WTC11 (cell line): ENCODE measurements at regions of chr1 and their contacts with region 1.

Region 1: DNA sequence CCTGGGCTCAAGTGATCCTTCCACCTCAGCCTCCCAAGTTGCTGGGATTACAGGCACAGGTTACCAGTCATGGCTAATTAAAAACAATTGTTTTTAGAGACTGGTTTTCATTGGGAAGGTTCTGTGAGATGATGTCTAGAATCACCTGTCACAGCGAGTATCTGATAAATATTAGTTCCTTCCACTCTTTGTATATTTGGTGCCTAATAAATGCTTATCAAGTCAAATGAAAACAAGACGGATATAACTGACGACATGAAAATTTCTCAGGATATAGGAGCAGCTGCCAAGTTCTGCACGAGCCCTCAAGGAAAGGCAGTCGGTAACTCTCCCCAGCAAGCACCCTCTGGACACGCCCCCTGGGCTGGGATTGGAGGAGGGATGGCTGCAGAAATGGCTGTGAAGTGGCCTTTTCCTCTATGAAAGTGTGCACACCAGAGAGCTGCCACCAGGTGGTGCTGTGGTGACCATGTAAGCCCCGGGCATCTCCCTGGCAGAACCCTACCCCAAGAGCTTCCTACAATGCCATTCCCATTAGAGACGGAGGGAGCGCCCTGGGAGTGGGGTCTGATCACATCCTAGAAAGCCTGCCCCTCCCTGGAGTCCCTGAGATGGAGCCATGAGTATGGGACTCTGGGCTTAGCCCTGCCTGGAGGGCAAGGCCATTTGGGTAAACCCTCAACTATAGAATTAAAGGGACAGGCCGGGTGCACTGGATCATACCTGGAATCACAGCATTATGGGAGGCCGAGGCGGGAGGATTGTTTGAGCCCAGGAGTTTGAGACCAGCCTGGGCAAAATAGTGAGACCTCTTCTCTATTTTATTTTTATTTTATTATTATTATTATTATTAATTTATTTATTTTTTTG is 50.9 kb downstream of the HTR6 start:
- DNase-seq: peak; percentile 99
- ATAC-seq: peak; percentile 97
- H3K4me3 Mint-ChIP-seq: peak overlapping the region; percentile 15; the same call in 1 of the 2 replicates
- H3K27ac Mint-ChIP-seq: no peak overlapping the region; the same call in 1 of the 2 replicates
- H3K4me1 Mint-ChIP-seq: peaks cover 15% of the 10 kb centered on the region
- H3K27me3 Mint-ChIP-seq: no peaks in the 10 kb centered on the region; the same call in 1 of the 2 replicates
- CTCF ChIP-seq: peak; percentile 74

Region 2: GRCh38 chr1:19728413-19729145 is 13.0 kb after region 1 on chr1:
- CTCF ChIA-PET with region 1: interaction called, 30 read pairs
- POLR2A ChIA-PET with region 1: no interaction called
- DNase-seq: no peak
- ATAC-seq: no peak
- H3K4me3 Mint-ChIP-seq: no peak overlapping the region
- H3K27ac Mint-ChIP-seq: no peak overlapping the region
- H3K4me1 Mint-ChIP-seq: peaks cover 2% of the 10 kb centered on the region
- H3K27me3 Mint-ChIP-seq: no peaks in the 10 kb centered on the region
- CTCF ChIP-seq: no peak

Region 3: DNA sequence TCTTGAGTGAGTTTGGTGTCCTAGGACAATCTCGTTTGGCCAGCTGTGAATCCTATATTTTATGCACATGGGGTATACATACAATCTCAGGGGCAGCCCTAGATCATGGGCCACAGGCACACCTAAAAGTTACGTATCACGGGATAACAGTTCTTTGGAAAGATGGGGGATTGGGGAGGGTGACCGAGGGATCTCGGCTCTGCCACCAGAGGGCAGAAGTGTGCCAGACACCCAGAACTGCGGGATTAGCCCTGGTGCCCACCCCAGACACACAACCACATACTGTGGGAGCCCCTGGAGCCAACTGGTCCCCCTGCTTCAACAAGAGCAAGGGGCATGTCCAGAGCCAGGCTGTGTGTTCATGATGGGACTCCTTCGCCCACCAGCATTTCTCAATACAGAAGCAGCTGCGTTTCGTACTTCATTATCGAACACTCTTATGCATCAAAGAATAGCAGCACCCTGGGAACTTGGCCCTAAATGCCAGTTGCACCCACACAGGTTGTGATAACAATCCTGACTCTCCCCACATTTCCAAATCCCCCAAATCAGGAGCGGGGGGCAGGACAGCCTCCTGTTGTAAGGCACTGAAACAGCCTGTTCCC is 46.7 kb after region 1 on chr1:
- CTCF ChIA-PET with region 1: interaction called, 12 read pairs
- POLR2A ChIA-PET with region 1: no interaction called
- DNase-seq: peak; percentile 73
- ATAC-seq: peak; percentile 83
- H3K4me3 Mint-ChIP-seq: no peak overlapping the region
- H3K27ac Mint-ChIP-seq: no peak overlapping the region
- H3K4me1 Mint-ChIP-seq: peaks cover 12% of the 10 kb centered on the region
- H3K27me3 Mint-ChIP-seq: no peaks in the 10 kb centered on the region; the same call in 1 of the 2 replicates
- CTCF ChIP-seq: peak; percentile 73

Region 4: DNA sequence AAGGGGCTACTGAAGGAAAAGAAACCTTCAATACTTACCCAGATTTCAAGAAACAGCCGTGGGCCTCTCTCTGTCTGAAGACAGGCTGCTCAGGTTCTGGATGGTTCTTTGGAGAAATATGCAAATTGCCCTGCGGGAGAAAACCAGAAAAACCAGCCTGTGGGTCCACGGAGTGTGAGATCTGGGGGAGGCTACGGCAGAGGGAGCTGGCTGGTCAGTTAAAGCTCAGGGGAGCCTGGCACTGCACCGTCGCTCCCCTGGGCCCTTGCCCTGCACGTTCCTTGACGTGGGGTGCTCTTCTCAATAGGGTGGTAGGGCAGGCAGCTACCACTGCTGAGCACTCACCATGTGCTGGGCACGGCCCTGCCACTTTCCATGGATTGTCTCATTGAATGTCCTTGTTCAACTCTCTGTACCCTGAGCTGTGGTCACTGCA is 71.4 kb after region 1 on chr1:
- CTCF ChIA-PET with region 1: interaction called, 10 read pairs
- POLR2A ChIA-PET with region 1: no interaction called
- DNase-seq: peak; percentile 68
- ATAC-seq: peak; percentile 92
- H3K4me3 Mint-ChIP-seq: no peak overlapping the region; the same call in 1 of the 2 replicates
- H3K27ac Mint-ChIP-seq: no peak overlapping the region
- H3K4me1 Mint-ChIP-seq: peaks cover 28% of the 10 kb centered on the region
- H3K27me3 Mint-ChIP-seq: peaks cover 45% of the 10 kb centered on the region
- CTCF ChIP-seq: no peak

Region 5: GRCh38 chr1:19837866-19838265 is 122.3 kb after region 1 on chr1:
- CTCF ChIA-PET with region 1: no interaction called
- POLR2A ChIA-PET with region 1: no interaction called
- DNase-seq: no peak
- ATAC-seq: no peak
- H3K4me3 Mint-ChIP-seq: no peak overlapping the region
- H3K27ac Mint-ChIP-seq: no peak overlapping the region
- H3K4me1 Mint-ChIP-seq: no peaks in the 10 kb centered on the region
- H3K27me3 Mint-ChIP-seq: peaks cover 2% of the 10 kb centered on the region
- CTCF ChIP-seq: no peak